ENCODE measurements at regions of chr11 and their contacts with region 1.

Region 1: DNA sequence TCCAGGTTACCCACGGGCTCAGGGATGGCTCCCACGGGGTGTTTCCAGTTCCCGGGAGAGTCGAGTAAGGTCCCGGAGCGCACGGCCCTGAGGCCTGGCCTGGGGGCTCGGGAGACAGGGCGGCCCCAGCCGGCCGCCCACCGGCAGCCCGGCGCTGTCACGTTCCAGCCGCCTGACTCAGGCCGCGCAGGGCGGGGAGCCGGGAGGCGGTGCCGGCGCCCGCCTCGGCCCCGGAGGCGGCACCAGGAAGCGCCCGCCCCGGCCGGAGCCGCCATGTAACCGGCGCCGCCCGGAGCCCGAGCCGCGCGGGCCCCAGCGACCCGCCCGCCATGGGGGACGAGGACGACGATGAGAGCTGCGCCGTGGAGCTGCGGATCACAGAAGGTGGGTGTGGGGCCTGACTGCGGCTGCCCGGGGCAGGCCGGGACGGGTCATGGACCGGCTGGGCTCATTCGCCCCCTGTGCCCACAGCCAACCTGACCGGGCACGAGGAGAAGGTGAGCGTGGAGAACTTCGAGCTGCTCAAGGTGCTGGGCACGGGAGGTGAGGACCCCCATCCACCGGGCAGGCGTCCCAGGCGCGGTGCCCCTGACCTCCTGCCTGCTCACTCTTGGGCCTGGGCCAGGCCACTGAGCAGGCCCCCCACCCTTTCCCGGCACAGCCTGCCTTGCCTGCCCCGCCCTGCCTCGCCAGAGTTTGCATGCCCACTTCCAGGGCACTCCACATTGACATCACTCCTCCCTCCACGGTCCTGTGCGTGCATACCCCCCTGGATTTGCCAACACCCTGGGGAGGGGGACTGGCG is at the start of gene RPS6KA4:
- DNase-seq: no peak
- ATAC-seq: peak; percentile 65
- H3K4me3 ChIP-seq: peak within 1 kb of the TSS; percentile 84 to 97
- H3K27ac ChIP-seq: peak within 1 kb of the TSS; percentile 87
- H3K4me1 ChIP-seq: peaks cover 28 to 61% of the 10 kb centered on the region in 2 experiments
- H3K27me3 ChIP-seq: no peaks in the 10 kb centered on the region
- CTCF ChIP-seq: no peak
- POLR2A ChIP-seq: peak; percentile 68
- RAD21 ChIP-seq: no peak
- total RNA-seq, gene RPS6KA4: 67.3 TPM

Region 2: DNA sequence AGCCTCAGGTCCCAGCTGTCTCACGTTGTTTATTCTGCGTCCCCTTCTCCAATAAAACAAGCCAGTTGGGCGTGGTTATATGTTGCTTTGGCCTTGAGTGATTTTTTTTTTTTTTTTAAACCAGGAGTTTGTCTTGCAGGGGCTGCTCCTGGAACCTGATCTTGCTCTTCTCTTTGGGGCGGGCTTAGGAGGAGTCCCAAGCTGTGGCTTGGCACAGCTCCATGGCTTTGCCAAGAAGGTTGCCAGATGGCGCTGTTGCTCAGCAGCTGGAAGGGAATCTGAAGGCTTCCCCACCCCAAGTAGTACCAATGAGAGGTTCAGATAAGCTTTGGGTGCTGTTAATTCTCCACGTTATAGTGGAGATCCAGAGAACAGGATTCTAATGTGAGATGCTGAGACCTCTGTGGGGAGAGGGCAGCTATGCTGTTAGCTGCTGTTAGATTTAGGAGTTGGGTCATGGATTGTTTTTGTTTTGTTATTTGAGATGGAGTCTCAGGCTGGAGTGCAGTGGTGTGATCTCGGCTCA is 154.6 kb before region 1 on chr11:
- CTCF ChIA-PET with region 1: interaction called, 31 read pairs
- POLR2A ChIA-PET with region 1: interaction called, 3 read pairs
- RAD21 ChIA-PET with region 1: interaction called in 1 of 2 experiments, 3 read pairs
- intact Hi-C with region 1: loop called (anchors 1 kb)
- DNase-seq: peak; percentile 88
- ATAC-seq: peak; percentile 80
- H3K4me3 ChIP-seq: no peak overlapping the region
- H3K27ac ChIP-seq: no peak overlapping the region
- H3K4me1 ChIP-seq: peaks cover 0 to 8% of the 10 kb centered on the region in 2 experiments; a peak in 1 of 4 replicates
- H3K27me3 ChIP-seq: no peaks in the 10 kb centered on the region
- CTCF ChIP-seq: peak; percentile 75 to 90 (median 87)
- POLR2A ChIP-seq: no peak
- RAD21 ChIP-seq: peak; percentile 94

Region 3: GRCh38 chr11:64284048-64284961 is 74.8 kb before region 1 on chr11 and contains the start of gene BAD:
- CTCF ChIA-PET with region 1: no interaction called
- POLR2A ChIA-PET with region 1: no interaction called
- RAD21 ChIA-PET with region 1: no interaction called
- intact Hi-C with region 1: no loop called
- DNase-seq: peak; percentile 82
- ATAC-seq: peak; percentile 87
- H3K4me3 ChIP-seq: peak within 1 kb of the TSS; percentile 77 to 80
- H3K27ac ChIP-seq: peak within 1 kb of the TSS; percentile 83
- H3K4me1 ChIP-seq: peaks cover 14 to 27% of the 10 kb centered on the region in 2 experiments
- H3K27me3 ChIP-seq: no peaks in the 10 kb centered on the region
- CTCF ChIP-seq: no peak
- POLR2A ChIP-seq: peak; percentile 23
- RAD21 ChIP-seq: no peak
- total RNA-seq, gene BAD: 51.9 TPM

Region 4: DNA sequence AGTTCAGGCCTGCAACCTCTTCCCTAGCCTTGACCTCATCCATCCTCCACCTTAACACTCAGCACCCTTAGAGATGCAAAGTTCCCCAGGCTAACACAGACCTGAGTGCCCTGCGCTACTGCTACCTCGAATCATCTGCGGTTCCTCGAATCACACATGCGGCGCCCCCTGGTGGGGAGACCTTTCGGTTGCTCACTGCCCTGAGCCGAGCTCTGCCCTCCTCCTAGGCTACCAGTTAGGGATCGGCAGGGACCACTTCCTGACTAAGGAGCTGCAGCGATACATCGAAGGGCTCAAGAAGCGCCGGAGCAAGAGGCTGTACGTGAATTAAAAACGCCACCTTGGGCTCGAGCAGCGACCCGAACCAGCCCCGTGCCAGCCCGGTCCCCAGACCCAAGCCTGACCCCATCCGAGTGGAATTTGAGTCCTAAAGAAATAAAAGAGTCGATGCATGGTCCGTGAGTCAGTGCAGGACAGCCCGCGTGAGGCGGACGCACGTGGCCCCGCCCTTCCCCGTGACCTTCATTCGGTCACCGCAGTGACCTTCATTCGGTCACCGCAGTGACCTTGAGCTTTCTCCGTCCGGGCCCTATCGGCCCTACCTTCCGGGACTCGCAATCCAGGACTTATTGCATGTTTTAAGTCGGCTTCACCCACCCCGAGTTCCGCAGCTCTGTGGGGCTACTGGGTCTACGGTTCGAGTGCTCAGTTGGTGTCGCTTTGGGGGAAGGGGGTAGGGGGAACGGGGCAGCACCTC is 54.6 kb before region 1 on chr11:
- CTCF ChIA-PET with region 1: interaction called, 40 read pairs
- POLR2A ChIA-PET with region 1: interaction called, 8 read pairs
- RAD21 ChIA-PET with region 1: interaction called, 4 read pairs
- intact Hi-C with region 1: loop called (anchors 1 kb)
- DNase-seq: peak; percentile 80
- ATAC-seq: peak; percentile 48
- H3K4me3 ChIP-seq: peak overlapping the region; percentile 59 to 70
- H3K27ac ChIP-seq: peak overlapping the region; percentile 99
- H3K4me1 ChIP-seq: peaks cover 12 to 55% of the 10 kb centered on the region in 2 experiments; a peak in 3 of 4 replicates
- H3K27me3 ChIP-seq: no peaks in the 10 kb centered on the region
- CTCF ChIP-seq: peak in 2 of 3 experiments; percentile 89 to 95; a peak in 4 of 6 replicates
- POLR2A ChIP-seq: peak; percentile 70
- RAD21 ChIP-seq: no peak

Region 5: DNA sequence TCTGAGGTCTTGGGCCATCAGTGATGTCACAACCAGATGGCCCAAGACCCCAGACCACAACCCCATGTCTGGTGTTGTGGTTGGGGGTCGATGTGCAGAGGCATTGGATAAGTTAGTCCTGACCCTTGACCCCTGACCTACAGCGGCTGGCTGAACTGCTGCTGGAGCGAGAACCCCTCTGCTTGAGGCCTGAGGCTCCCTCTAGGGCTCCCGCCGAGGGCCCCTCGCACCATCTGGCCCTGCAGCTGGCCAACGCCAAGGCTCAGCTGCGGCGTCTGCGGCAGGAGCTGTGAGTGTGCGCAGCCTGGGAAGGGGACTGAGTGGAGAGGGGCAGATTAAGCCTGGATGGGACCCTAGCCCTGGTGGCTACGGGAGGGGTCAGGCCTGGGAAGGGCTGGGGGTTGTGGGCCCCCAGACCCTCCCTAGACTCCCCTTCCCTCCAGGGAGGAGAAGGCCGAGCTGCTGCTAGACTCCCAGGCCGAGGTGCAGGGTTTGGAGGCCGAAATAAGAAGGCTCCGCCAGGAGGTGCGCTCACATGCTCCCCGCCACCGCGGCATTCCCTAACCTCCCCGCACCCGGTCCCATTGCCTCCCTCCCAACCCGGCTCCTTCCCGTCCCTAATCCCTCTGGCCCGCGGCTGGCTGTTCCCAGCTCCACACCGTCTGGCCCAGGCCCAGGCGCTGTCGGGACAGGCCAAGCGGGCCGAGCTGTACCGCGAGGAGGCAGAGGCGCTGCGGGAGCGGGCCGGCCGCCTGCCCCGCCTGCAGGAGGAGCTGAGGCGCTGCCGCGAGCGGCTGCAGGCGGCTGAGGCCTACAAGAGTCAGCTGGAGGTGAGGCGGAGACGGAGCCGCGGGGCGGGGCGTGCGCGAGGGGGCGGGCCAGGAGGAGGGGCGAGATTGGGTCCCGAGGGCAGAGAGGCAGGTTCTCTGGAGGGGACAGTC is 17.0 kb before region 1 on chr11:
- CTCF ChIA-PET with region 1: interaction called, 46 read pairs
- POLR2A ChIA-PET with region 1: interaction called, 5 read pairs
- RAD21 ChIA-PET with region 1: no interaction called
- intact Hi-C with region 1: no loop called
- DNase-seq: peak; percentile 80
- ATAC-seq: peak; percentile 92
- H3K4me3 ChIP-seq: peak overlapping the region; percentile 43 to 61
- H3K27ac ChIP-seq: peak overlapping the region; percentile 81
- H3K4me1 ChIP-seq: peaks cover 14 to 35% of the 10 kb centered on the region in 2 experiments
- H3K27me3 ChIP-seq: no peaks in the 10 kb centered on the region
- CTCF ChIP-seq: peak in 1 of 3 experiments; percentile 51; a peak in 3 of 6 replicates
- POLR2A ChIP-seq: peak; percentile 58
- RAD21 ChIP-seq: no peak

Region 6: GRCh38 chr11:64644647-64645275 is 285.7 kb after region 1 on chr11:
- CTCF ChIA-PET with region 1: interaction called, 76 read pairs
- POLR2A ChIA-PET with region 1: no interaction called
- RAD21 ChIA-PET with region 1: interaction called in 1 of 2 experiments, 8 read pairs
- intact Hi-C with region 1: no loop called
- DNase-seq: no peak
- ATAC-seq: peak; percentile 68
- H3K4me3 ChIP-seq: no peak overlapping the region
- H3K27ac ChIP-seq: no peak overlapping the region
- H3K4me1 ChIP-seq: no peaks in the 10 kb centered on the region
- H3K27me3 ChIP-seq: peaks cover 18% of the 10 kb centered on the region
- CTCF ChIP-seq: peak in 1 of 3 experiments; percentile 34; a peak in 3 of 6 replicates
- POLR2A ChIP-seq: no peak
- RAD21 ChIP-seq: no peak

Region 7: GRCh38 chr11:64723117-64723906 is 364.2 kb after region 1 on chr11 and contains the start of gene NRXN2:
- CTCF ChIA-PET with region 1: no interaction called
- POLR2A ChIA-PET with region 1: no interaction called
- RAD21 ChIA-PET with region 1: no interaction called
- intact Hi-C with region 1: loop called (anchors 5 kb)
- DNase-seq: peak; percentile 53
- ATAC-seq: peak; percentile 99
- H3K4me3 ChIP-seq: peak within 1 kb of the TSS; percentile 37 to 58
- H3K27ac ChIP-seq: no peak within 1 kb of the TSS; the same call in 1 of the 2 replicates
- H3K4me1 ChIP-seq: peaks cover 0 to 10% of the 10 kb centered on the region in 2 experiments; a peak in 1 of 4 replicates
- H3K27me3 ChIP-seq: 0 out of 2 replicates have a peak, but pooled peaks cover 6% of the 10 kb centered on the region
- CTCF ChIP-seq: peak; percentile 88 to 98 (median 96)
- POLR2A ChIP-seq: no peak
- RAD21 ChIP-seq: peak; percentile 80
- total RNA-seq, gene NRXN2: 1.5 TPM

Measured in HCT116 (cell line).